ENCODE measurements at regions of chr6 and their contacts with region 1.

Region 1: GRCh38 chr6:75611702-75612375 is 10.2 kb downstream of the SENP6 start:
- DNase-seq: no peak
- ATAC-seq: peak; percentile 48
- H3K4me3 ChIP-seq: no peak overlapping the region
- H3K27ac ChIP-seq: no peak overlapping the region
- H3K4me1 ChIP-seq: peaks cover 12 to 51% of the 10 kb centered on the region in 2 experiments
- H3K27me3 ChIP-seq: no peaks in the 10 kb centered on the region
- CTCF ChIP-seq: no peak
- EP300 ChIP-seq: no peak
- POLR2A ChIP-seq: no peak
- RAD21 ChIP-seq: no peak

Region 2: DNA sequence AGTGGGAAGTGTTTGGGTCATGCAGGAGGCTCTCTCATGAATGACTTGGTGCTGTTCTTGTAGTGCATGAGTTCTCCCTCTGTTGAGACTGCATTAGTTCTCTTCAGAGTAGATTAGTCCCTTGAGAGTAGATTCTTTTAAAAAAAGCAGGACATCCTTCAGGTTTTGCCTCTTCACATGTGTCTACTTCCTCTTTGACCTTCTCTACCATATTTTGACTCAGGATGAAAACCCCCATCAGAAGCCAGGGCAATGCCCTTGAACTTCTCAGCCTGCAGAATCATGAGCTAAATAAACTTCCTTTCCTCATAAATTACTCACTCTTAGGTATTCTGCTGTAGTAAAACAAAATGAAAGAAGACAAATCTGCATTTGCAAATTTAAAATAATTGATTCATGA is 1745.5 kb before region 1 on chr6:
- CTCF ChIA-PET with region 1: no interaction called
- POLR2A ChIA-PET with region 1: no interaction called
- in situ Hi-C with region 1: no loop called
- intact Hi-C with region 1: no loop called
- DNase-seq: no peak
- ATAC-seq: no peak
- H3K4me3 ChIP-seq: no peak overlapping the region
- H3K27ac ChIP-seq: no peak overlapping the region
- H3K4me1 ChIP-seq: no peaks in the 10 kb centered on the region
- H3K27me3 ChIP-seq: no peaks in the 10 kb centered on the region
- CTCF ChIP-seq: no peak
- EP300 ChIP-seq: no peak
- POLR2A ChIP-seq: no peak
- RAD21 ChIP-seq: no peak

Region 3: GRCh38 chr6:75601304-75602245 is 10.3 kb before region 1 on chr6 and contains the start of gene SENP6:
- CTCF ChIA-PET with region 1: no interaction called
- POLR2A ChIA-PET with region 1: interaction called, 15 read pairs
- in situ Hi-C with region 1: no loop called
- intact Hi-C with region 1: no loop called
- DNase-seq: peak; percentile 82 to 87 (median 85)
- ATAC-seq: peak; percentile 87
- H3K4me3 ChIP-seq: peak within 1 kb of the TSS; percentile 89
- H3K27ac ChIP-seq: peak within 1 kb of the TSS; percentile 95
- H3K4me1 ChIP-seq: peaks cover 8 to 17% of the 10 kb centered on the region in 2 experiments; a peak in 4 of 5 replicates
- H3K27me3 ChIP-seq: no peaks in the 10 kb centered on the region
- CTCF ChIP-seq: no peak
- EP300 ChIP-seq: no peak
- POLR2A ChIP-seq: peak; percentile 84
- RAD21 ChIP-seq: no peak
- polyA plus RNA-seq, gene SENP6: 11.1 to 12.6 TPM

Measured in K562 (cell line).